ENCODE measurements at regions of chr16 and their contacts with region 1.

Region 1: DNA sequence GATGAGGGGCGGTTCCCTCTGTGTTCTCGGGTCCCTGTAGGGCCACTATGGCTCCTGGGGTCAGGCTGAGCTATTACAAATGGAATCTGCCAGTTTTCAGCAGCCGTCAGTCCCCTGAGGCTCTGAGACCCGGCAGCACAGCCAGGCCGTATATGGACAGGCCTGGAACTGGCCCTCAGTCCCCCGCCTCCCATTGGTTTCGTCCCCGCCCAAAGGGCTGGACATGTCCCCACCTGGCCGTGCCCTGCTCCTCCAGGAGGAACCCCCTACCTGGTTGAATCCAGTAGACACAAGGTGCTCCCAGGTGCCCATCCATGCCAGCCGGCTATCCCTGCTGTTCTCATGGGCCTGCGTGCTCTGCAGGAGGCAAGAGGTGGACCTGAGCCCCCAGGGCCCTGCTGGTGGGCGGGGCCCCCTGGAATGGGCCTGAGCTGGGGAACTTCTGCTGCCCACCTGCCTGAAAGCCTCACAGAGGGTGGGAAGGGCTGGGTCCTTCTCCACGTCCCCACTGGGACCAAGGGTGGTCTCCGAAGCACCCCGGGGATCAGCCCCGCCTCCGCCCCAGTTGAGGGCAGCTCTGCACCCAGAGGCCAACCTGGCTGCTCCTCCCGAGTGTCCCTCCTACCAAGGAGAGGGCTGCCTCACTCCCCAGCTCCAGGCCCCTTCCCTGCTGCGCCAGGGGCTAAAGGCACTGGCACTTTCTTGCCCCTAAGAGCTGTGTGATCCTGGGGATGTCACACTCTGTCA is 16.8 kb downstream of the VASN start:
- DNase-seq: peak; percentile 80 to 94
- H3K4me3 ChIP-seq: peak overlapping the region in 1 of 2 donors; percentile 30
- H3K27ac ChIP-seq: peak overlapping the region; percentile 94 to 99
- H3K4me1 ChIP-seq: peaks cover 47 to 75% of the 10 kb centered on the region in 2 donors
- H3K27me3 ChIP-seq: no peaks in the 10 kb centered on the region
- CTCF ChIP-seq: no peak

Region 2: GRCh38 chr16:4350787-4351659 is 37.4 kb before region 1 on chr16 and contains the start of gene PAM16:
- intact Hi-C with region 1: loop called (anchors 5 kb)
- DNase-seq: peak; percentile 79 to 97
- H3K4me3 ChIP-seq: peak within 1 kb of the TSS; percentile 85 to 88
- H3K27ac ChIP-seq: peak within 1 kb of the TSS; percentile 73 to 75
- H3K4me1 ChIP-seq: peaks cover 0 to 16% of the 10 kb centered on the region in 2 donors
- H3K27me3 ChIP-seq: no peaks in the 10 kb centered on the region
- CTCF ChIP-seq: peak in 1 of 3 experiments; percentile 14
- total RNA-seq, gene PAM16: 26.6 TPM

Region 3: GRCh38 chr16:4371357-4372000 is 17.0 kb before region 1 on chr16 and contains the start of gene VASN:
- intact Hi-C with region 1: loop called (anchors 1 kb)
- DNase-seq: peak in 1 of 2 donors; percentile 91
- H3K4me3 ChIP-seq: peak within 1 kb of the TSS; percentile 64 to 81
- H3K27ac ChIP-seq: peak within 1 kb of the TSS; percentile 94 to 99
- H3K4me1 ChIP-seq: peaks cover 22 to 57% of the 10 kb centered on the region in 2 donors
- H3K27me3 ChIP-seq: no peaks in the 10 kb centered on the region
- CTCF ChIP-seq: no peak
- total RNA-seq, gene VASN: 218 TPM

Region 4: GRCh38 chr16:4416200-4417032 is 28.0 kb after region 1 on chr16 and contains the start of gene CORO7:
- intact Hi-C with region 1: loop called (anchors 2 kb)
- DNase-seq: peak; percentile 87 to 98
- H3K4me3 ChIP-seq: peak within 1 kb of the TSS; percentile 65 to 83
- H3K27ac ChIP-seq: peak within 1 kb of the TSS; percentile 49 to 67
- H3K4me1 ChIP-seq: peaks cover 0 to 9% of the 10 kb centered on the region in 2 donors
- H3K27me3 ChIP-seq: no peaks in the 10 kb centered on the region
- CTCF ChIP-seq: peak in 1 of 3 experiments; percentile 3
- total RNA-seq, gene CORO7: 41.9 TPM

Region 5: DNA sequence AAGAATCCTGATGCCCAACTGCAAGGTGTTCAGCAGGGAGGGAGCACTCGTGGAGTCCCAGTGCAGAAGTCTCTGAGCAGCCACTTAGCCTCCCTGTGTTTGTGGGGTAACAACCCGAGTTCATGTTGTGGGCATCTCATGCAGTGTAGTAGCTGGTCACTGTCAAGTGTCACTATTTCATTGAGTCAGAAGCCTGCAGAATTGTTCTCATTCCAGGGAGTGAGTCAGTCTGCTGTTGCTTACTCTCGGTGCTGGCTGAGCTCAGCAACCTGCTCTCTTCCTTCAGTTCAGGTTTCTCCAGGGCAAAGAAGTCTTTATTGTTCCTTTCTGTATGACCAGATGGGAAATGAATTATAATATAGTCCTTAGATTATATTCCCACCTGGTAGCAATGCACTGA is 111.8 kb after region 1 on chr16:
- intact Hi-C with region 1: no loop called
- DNase-seq: no peak
- H3K4me3 ChIP-seq: peak overlapping the region; percentile 14 to 49
- H3K27ac ChIP-seq: peak overlapping the region; percentile 74 to 78
- H3K4me1 ChIP-seq: peaks cover 3 to 22% of the 10 kb centered on the region in 2 donors
- H3K27me3 ChIP-seq: no peaks in the 10 kb centered on the region
- CTCF ChIP-seq: no peak

Region 6: DNA sequence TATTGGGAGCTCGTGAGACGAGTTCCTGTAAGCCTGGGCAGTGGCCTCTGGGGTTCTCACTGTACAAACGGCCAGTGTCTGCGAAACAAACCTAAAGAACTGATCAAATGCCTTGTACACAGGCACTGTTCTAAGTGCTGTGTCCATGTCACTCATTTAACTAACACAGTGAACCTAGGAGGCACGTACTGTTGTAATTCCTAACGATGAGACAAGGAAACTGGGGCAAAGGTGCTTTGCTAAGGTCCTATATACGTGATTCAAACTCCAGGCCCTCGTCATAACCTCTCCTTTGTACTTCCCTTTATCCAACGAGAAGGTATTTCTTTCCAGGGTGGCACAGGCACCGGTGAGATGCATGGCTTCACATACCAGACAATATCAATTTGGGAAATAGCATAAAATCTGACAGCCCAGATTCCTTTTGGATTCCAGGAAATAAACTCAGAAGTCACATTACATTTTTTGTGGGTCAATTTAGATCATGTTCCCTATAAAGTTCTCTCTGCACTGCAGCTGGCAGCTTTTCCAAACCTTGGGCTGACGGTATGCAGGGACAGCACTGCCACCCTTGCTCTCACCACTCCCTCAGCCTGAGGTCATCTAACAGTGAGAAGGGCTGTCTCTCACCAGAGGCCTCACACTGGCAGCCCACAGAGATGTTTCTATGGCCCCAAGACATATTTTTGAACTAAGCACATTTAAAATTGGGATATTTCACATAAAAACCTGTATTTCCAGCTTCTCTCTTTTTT is 440.3 kb after region 1 on chr16:
- intact Hi-C with region 1: no loop called
- DNase-seq: no peak
- H3K4me3 ChIP-seq: no peak overlapping the region
- H3K27ac ChIP-seq: no peak overlapping the region
- H3K4me1 ChIP-seq: no peaks in the 10 kb centered on the region
- H3K27me3 ChIP-seq: no peaks in the 10 kb centered on the region
- CTCF ChIP-seq: no peak

Measured in ascending aorta (tissue), 2 donors.